Esophagus muscularis mucosa (tissue), 4 donors: ENCODE measurements at regions of chr21 and their contacts with region 1.

Region 1: DNA sequence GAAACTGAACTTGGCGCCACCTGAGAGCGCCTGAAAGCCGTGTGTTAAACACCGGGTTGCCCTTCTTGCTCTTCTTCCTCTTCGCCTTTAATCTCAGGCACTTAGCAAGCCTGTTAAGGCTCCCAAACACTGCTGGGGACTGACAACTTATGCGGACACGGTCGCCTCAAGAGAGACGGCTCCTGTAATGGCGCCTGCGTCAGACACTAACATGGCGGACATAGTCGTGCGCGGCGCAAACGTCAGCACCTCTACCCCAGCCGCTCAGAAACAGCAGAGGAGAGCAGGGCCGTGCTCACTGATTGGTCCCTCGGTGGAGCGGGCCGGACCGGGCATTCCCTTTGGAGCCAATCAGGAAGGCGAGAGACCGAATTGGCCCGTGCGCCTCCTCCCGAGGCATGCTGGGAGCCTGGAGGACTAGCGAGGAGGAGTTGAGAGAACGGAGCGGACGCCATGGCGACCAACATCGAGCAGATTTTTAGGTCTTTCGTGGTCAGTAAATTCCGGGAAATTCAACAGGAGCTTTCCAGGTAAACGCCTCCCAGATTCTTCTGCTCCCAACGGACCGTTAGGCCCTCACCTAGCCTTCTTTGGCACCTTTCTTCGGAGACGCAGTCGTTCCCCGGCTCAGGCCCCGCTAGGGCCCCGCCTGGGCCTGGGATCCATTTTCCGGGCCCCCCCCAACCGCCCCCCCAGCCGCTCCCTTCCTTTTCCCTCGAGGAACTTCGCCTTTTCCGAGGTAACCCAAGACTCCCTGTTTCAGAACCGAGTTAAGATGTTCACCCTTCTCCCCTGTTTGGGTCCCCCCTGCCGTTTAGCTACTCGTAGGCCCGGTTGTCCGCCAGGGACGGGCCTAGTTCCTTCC is at the start of gene SON:
- DNase-seq: peak; percentile 100
- H3K4me3 ChIP-seq: peak within 1 kb of the TSS; percentile 72 to 81 (median 75)
- H3K27ac ChIP-seq: peak within 1 kb of the TSS; percentile 96 to 99 (median 98)
- H3K4me1 ChIP-seq: peaks cover 34 to 51% (median 47%) of the 10 kb centered on the region in 4 donors
- H3K27me3 ChIP-seq: no peaks in the 10 kb centered on the region
- CTCF ChIP-seq: no peak
- EP300 ChIP-seq: no peak
- POLR2A ChIP-seq: peak; percentile 72
- total RNA-seq, gene SON: 219 to 258 (median 244) TPM

Region 2: GRCh38 chr21:33479679-33480480 is 63.0 kb before region 1 on chr21 and contains the start of gene TMEM50B:
- intact Hi-C with region 1: loop called (anchors 5 kb)
- DNase-seq: peak; percentile 98
- H3K4me3 ChIP-seq: peak within 1 kb of the TSS; percentile 72 to 94 (median 82)
- H3K27ac ChIP-seq: peak within 1 kb of the TSS; percentile 91 to 96 (median 96)
- H3K4me1 ChIP-seq: peaks cover 19 to 32% (median 23%) of the 10 kb centered on the region in 4 donors
- H3K27me3 ChIP-seq: no peaks in the 10 kb centered on the region
- CTCF ChIP-seq: peak; percentile 42 to 62 (median 59)
- EP300 ChIP-seq: no peak
- POLR2A ChIP-seq: peak; percentile 84
- total RNA-seq, gene TMEM50B: 40.2 to 95.1 (median 67.2) TPM

Region 3: DNA sequence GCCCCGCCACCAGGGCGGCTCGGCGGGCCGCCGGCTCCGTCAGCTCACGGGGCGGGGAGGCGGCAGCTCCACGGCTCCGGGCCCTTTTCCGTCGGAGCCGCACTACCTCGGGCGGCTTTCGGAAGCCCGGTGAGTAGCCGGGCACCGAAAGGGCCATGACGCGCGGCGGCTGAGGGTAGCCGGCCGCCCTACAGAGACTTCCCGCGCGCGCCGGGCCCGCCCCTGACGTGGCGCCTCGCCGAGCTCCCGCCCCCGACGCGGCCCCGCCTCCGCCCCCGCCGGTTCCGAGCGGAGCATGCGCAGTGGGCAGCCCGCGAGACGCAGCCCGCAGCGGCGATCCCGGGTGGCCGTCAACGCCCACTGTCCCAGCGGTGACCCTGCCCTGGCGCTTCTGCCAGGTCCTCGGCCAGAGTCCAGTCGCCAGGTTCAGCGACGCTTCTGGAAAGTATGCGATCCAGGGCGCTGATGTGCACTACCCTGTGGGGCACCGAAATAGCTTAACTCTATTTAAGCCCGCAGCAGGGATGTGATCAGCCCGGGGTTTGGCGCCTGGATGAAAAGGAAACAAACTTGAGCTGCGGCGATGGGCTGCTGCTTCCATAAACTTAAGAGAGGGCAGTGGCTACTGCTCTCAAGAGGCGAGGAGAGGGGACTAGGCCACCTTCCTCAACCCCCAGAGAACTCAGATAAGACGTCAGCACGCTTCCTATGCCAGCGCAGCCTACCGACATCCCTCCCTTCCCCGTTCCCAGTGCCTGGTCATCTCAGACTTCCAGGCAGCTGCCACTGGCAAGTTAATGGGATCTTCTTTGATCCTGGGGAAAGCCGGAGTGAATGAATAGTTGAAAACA is 45.8 kb after region 1 on chr21 and contains the start of gene DONSON:
- intact Hi-C with region 1: loop called (anchors 5 kb)
- DNase-seq: peak; percentile 94
- H3K4me3 ChIP-seq: peak within 1 kb of the TSS; percentile 68 to 93 (median 78)
- H3K27ac ChIP-seq: peak within 1 kb of the TSS; percentile 83 to 96 (median 90)
- H3K4me1 ChIP-seq: peaks cover 7 to 17% (median 13%) of the 10 kb centered on the region in 4 donors
- H3K27me3 ChIP-seq: no peaks in the 10 kb centered on the region
- CTCF ChIP-seq: peak in 2 of 3 experiments; percentile 16 to 19
- EP300 ChIP-seq: no peak
- POLR2A ChIP-seq: no peak
- total RNA-seq, gene DONSON: 3.5 to 11.2 (median 5.2) TPM

Region 4: GRCh38 chr21:33670076-33670978 is 127.5 kb after region 1 on chr21:
- intact Hi-C with region 1: no loop called
- DNase-seq: no peak
- H3K4me3 ChIP-seq: no peak overlapping the region
- H3K27ac ChIP-seq: no peak overlapping the region
- H3K4me1 ChIP-seq: peaks cover 11 to 28% (median 19%) of the 10 kb centered on the region in 4 donors
- H3K27me3 ChIP-seq: no peaks in the 10 kb centered on the region
- CTCF ChIP-seq: no peak
- EP300 ChIP-seq: no peak
- POLR2A ChIP-seq: no peak

Region 5: DNA sequence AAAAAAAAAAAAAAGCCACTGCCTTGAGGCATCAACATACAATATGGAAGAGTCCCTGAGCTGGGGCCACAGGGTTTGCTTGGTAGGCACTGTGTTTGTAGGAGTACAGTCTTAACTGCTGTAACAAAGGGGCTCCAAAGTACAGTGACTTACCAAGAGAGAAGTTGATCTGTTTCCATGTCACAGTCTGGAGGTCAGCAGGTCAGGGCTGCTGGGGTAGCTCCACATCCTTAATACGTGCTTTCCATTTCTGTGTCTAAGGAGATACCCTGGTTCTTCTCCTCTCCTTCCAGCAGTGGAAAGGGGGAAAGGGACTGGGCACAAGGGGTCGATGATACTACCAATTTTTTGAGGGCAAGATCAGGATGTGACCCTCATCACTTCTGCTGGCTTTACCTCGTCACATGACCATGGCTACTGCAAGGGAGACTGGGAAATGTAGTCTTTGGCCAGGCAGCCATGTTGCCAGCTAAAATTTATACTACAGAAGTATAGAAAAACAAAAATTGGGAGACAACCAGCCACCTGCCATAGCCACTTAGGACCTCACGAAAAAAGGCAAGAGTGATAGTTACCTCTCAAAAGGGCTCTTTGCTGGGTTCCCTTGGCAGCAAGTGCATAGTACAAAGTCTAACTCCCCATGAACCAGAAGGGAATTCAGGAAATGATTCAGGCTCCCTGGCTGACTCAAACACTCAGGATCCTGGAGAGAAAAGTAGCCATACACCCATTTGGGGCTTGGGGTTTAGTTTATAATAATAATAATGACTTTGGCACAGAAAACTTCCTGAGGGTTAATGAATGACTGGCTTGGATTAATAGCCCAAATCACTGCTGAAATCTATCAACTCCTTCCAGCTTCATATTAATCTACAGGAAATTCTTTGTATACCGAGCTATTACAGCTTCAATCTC is 425.5 kb after region 1 on chr21:
- intact Hi-C with region 1: no loop called
- DNase-seq: no peak
- H3K4me3 ChIP-seq: no peak overlapping the region
- H3K27ac ChIP-seq: peak overlapping the region in 3 of 4 donors; percentile 30 to 35 (median 34)
- H3K4me1 ChIP-seq: peaks cover 13 to 20% (median 17%) of the 10 kb centered on the region in 4 donors
- H3K27me3 ChIP-seq: no peaks in the 10 kb centered on the region
- CTCF ChIP-seq: no peak
- EP300 ChIP-seq: no peak
- POLR2A ChIP-seq: no peak